Calu3 (cell line): ENCODE measurements at regions of chr4 and their contacts with region 1.

Region 1: DNA sequence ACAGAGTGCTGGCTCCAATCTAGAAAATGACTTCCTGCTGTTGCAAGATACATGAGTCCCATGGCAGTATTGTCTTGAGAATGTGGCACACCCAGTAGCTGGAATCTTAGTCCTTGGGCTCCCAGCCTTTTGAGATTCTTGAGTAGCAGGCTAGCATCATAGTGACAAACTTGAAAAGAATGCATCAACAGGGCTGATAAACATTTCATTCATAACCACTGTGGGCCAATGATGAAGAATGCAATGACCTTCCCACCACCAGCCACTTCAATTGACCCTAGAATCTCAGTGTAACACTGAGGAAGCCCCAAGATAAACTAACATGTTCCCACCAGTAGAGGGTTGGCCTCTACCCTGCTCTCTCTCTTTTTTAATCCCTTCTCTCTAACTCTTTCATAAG is 329.3 kb downstream of the GBA3 start:
- DNase-seq: peak; percentile 68
- H3K4me3 Mint-ChIP-seq: no peak overlapping the region
- H3K27ac Mint-ChIP-seq: peak overlapping the region; percentile 83
- H3K4me1 Mint-ChIP-seq: peaks cover 19% of the 10 kb centered on the region
- H3K27me3 Mint-ChIP-seq: no peaks in the 10 kb centered on the region
- CTCF ChIP-seq: peak; percentile 18

Region 2: GRCh38 chr4:22969314-22969896 is 52.6 kb before region 1 on chr4:
- CTCF ChIA-PET with region 1: interaction called, 3 read pairs
- intact Hi-C with region 1: loop called (anchors 2 kb)
- DNase-seq: peak; percentile 19
- H3K4me3 Mint-ChIP-seq: no peak overlapping the region
- H3K27ac Mint-ChIP-seq: peak overlapping the region; percentile 90
- H3K4me1 Mint-ChIP-seq: peaks cover 26% of the 10 kb centered on the region
- H3K27me3 Mint-ChIP-seq: no peaks in the 10 kb centered on the region
- CTCF ChIP-seq: no peak

Region 3: GRCh38 chr4:22987870-22988269 is 34.2 kb before region 1 on chr4:
- CTCF ChIA-PET with region 1: no interaction called
- intact Hi-C with region 1: no loop called
- DNase-seq: no peak
- H3K4me3 Mint-ChIP-seq: no peak overlapping the region
- H3K27ac Mint-ChIP-seq: no peak overlapping the region
- H3K4me1 Mint-ChIP-seq: peaks cover 25% of the 10 kb centered on the region
- H3K27me3 Mint-ChIP-seq: no peaks in the 10 kb centered on the region
- CTCF ChIP-seq: no peak

Region 4: GRCh38 chr4:23084559-23085248 is 62.7 kb after region 1 on chr4:
- CTCF ChIA-PET with region 1: no interaction called
- intact Hi-C with region 1: loop called (anchors 2 kb)
- DNase-seq: peak; percentile 53
- H3K4me3 Mint-ChIP-seq: no peak overlapping the region
- H3K27ac Mint-ChIP-seq: peak overlapping the region; percentile 82
- H3K4me1 Mint-ChIP-seq: peaks cover 9% of the 10 kb centered on the region
- H3K27me3 Mint-ChIP-seq: no peaks in the 10 kb centered on the region
- CTCF ChIP-seq: no peak